T-cell (primary cell): ENCODE measurements at regions of chr16 and their contacts with region 1.

Region 1: GRCh38 chr16:14310519-14310991 is 239.4 kb downstream of the MRTFB start:
- DNase-seq: no peak
- ATAC-seq: no peak
- H3K4me3 ChIP-seq: no peak overlapping the region
- H3K4me3 Mint-ChIP-seq: no peak overlapping the region
- H3K27ac ChIP-seq: no peak overlapping the region
- H3K27ac Mint-ChIP-seq: no peak overlapping the region
- H3K4me1 ChIP-seq: peaks cover 25 to 38% of the 10 kb centered on the region in 2 experiments
- H3K4me1 Mint-ChIP-seq: peaks cover 35 to 37% (median 36%) of the 10 kb centered on the region in 3 donors
- H3K27me3 ChIP-seq: no peaks in the 10 kb centered on the region
- H3K27me3 Mint-ChIP-seq: no peaks in the 10 kb centered on the region

Region 2: DNA sequence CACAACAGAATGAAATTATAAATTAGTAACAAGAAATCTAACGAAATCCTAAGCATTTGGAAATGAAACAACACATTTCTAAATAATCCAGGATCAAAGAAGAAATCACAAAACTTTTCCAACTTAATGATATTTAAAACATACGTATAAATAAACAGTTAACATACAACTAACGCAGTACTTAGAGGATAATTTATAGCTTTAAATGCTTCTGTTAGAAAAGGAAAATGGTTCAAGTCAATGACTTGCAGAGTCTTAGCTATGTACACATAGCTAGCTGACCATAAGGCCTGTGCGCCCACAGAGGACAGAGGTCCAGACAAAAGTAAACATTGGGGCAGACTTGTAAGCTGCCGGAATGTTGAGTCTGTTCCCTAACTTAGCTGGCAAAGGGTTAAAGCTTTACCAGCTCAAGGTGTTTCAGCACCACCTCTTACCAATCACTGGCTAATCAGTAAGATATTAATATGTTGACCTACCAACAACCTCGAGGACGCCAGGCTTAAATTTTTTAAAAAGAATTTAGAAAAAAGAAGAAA is 234.9 kb after region 1 on chr16:
- CTCF ChIA-PET with region 1: no interaction called
- POLR2A ChIA-PET with region 1: interaction called in 1 of 2 experiments, 10 read pairs
- DNase-seq: no peak
- ATAC-seq: no peak
- H3K4me3 ChIP-seq: no peak overlapping the region
- H3K4me3 Mint-ChIP-seq: no peak overlapping the region
- H3K27ac ChIP-seq: no peak overlapping the region
- H3K27ac Mint-ChIP-seq: no peak overlapping the region
- H3K4me1 ChIP-seq: no peaks in the 10 kb centered on the region
- H3K4me1 Mint-ChIP-seq: peaks cover 0 to 14% (median 0%) of the 10 kb centered on the region in 3 donors
- H3K27me3 ChIP-seq: no peaks in the 10 kb centered on the region
- H3K27me3 Mint-ChIP-seq: no peaks in the 10 kb centered on the region